Sigmoid colon (tissue), 7 donors: ENCODE measurements at regions of chr5 and their contacts with region 1.

Region 1: GRCh38 chr5:142888469-142889085 is 118.4 kb downstream of the ARHGAP26 start:
- DNase-seq: no peak
- H3K4me3 ChIP-seq: no peak overlapping the region
- H3K27ac ChIP-seq: no peak overlapping the region
- H3K4me1 ChIP-seq: peaks cover 0 to 5% (median under 1%) of the 10 kb centered on the region in 4 donors
- H3K27me3 ChIP-seq: no peaks in the 10 kb centered on the region
- CTCF ChIP-seq: peak; percentile 30 to 75 (median 64)
- EP300 ChIP-seq: no peak
- POLR2A ChIP-seq: no peak

Region 2: DNA sequence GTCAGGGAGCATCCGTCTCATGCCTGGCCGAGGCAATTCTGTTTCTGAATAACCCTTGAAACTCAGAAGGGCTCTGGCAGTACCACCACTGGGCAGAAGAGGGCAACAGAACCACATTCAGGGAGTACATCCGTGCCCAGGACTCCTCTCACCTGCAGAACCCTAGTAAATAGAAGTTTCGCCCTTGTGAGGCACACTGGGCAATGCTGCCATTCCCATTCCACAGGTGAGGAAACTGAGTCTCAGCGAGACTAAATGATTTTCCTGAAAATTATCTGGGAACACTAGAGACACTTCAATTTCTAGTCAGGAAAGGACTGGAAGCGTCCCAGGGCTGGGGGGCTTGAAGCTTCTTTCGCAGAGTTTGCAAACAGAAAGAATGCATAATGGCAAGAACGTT is 277.4 kb before region 1 on chr5:
- intact Hi-C with region 1: loop called (anchors 10 kb)
- DNase-seq: peak; percentile 80
- H3K4me3 ChIP-seq: no peak overlapping the region
- H3K27ac ChIP-seq: no peak overlapping the region
- H3K4me1 ChIP-seq: peaks cover 0 to 12% (median 5%) of the 10 kb centered on the region in 4 donors
- H3K27me3 ChIP-seq: no peaks in the 10 kb centered on the region
- CTCF ChIP-seq: peak; percentile 84 to 93 (median 89)
- EP300 ChIP-seq: no peak
- POLR2A ChIP-seq: no peak

Region 3: GRCh38 chr5:142713121-142713706 is 175.4 kb before region 1 on chr5:
- intact Hi-C with region 1: loop called (anchors 1 kb)
- DNase-seq: peak; percentile 92
- H3K4me3 ChIP-seq: peak overlapping the region; percentile 29 to 56 (median 51)
- H3K27ac ChIP-seq: peak overlapping the region; percentile 67 to 83 (median 78)
- H3K4me1 ChIP-seq: peaks cover 0 to 12% (median 7%) of the 10 kb centered on the region in 4 donors
- H3K27me3 ChIP-seq: no peaks in the 10 kb centered on the region
- CTCF ChIP-seq: peak; percentile 82 to 99 (median 94)
- EP300 ChIP-seq: no peak
- POLR2A ChIP-seq: no peak